Naive thymus-derived CD4-positive, alpha-beta T cell (primary cell): ENCODE measurements at regions of chr4 and their contacts with region 1.

Region 1: DNA sequence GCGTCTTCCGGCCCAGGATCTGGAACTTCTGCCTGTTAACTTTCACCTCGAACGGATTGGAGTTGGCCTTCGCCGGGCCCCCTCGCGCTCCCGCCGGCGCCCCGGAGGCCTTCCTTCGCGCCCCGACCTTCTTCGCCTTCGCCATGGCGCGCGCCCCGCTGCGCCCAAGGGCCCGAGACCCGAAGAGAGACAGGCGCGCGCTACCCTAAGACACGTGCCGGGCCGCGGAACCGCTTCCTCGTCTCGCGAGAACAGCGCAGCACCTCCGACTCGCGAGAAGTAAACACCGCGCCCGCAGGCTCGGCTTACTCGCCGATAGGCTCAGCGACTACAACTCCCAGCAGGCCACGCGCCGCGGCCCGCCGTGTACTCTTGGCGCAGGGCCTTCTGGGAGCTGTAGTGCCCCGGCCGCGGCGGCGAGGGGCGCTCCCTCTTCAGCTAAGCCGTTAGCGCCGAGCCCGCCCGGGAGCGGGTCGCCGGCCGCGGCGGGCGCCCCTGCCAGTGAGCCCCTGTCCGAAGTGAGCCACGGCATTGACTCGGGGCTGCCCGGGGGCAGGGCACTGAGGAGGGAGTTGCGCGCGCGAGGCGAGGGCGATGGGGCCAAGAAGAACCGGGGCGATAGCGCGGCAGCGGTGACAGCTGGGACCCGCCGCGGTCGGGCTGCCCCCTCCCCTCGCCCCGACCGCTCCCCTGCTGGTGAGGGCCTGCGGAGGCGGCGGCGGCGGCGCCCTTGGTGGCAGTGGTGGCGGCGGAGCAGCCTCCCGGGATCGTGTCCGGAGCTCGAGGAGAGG is at the starts of genes GRK4 and NOP14:
- DNase-seq: peak; percentile 91 to 98 (median 96)
- ATAC-seq: peak; percentile 97
- H3K4me3 ChIP-seq: peak within 1 kb of the TSS; percentile 98
- H3K4me3 Mint-ChIP-seq: peak within 1 kb of the TSS; percentile 82 to 95 (median 90)
- H3K27ac ChIP-seq: peak within 1 kb of the TSS; percentile 84
- H3K27ac Mint-ChIP-seq: peak within 1 kb of the TSS; percentile 67 to 93 (median 85)
- H3K4me1 ChIP-seq: peaks cover 18 to 19% of the 10 kb centered on the region in 2 donors
- H3K4me1 Mint-ChIP-seq: peaks cover 20 to 42% (median 35%) of the 10 kb centered on the region in 7 donors
- H3K27me3 ChIP-seq: no peaks in the 10 kb centered on the region
- H3K27me3 Mint-ChIP-seq: peaks cover 0 to 2% (median 0%) of the 10 kb centered on the region in 5 donors
- total RNA-seq, gene GRK4: 1.7 to 4.0 (median 2.8) TPM
- total RNA-seq, gene NOP14: 23.1 to 59.8 (median 43.9) TPM

Region 2: GRCh38 chr4:1712216-1713002 is 1251.0 kb before region 1 on chr4 and contains the start of gene SLBP:
- CTCF ChIA-PET with region 1: no interaction called
- POLR2A ChIA-PET with region 1: no interaction called
- intact Hi-C with region 1: loop called in 1 of 2 experiments (anchors 5 kb)
- DNase-seq: peak; percentile 98 to 99 (median 98)
- ATAC-seq: peak; percentile 92
- H3K4me3 ChIP-seq: peak within 1 kb of the TSS; percentile 100
- H3K4me3 Mint-ChIP-seq: peak within 1 kb of the TSS; percentile 89 to 98 (median 94)
- H3K27ac ChIP-seq: peak within 1 kb of the TSS; percentile 99
- H3K27ac Mint-ChIP-seq: peak within 1 kb of the TSS; percentile 90 to 98 (median 94)
- H3K4me1 ChIP-seq: peaks cover 32 to 34% of the 10 kb centered on the region in 2 donors
- H3K4me1 Mint-ChIP-seq: peaks cover 11 to 67% (median 59%) of the 10 kb centered on the region in 7 donors
- H3K27me3 ChIP-seq: no peaks in the 10 kb centered on the region
- H3K27me3 Mint-ChIP-seq: no peaks in the 10 kb centered on the region
- total RNA-seq, gene SLBP: 29.5 to 103 (median 30.3) TPM

Region 3: DNA sequence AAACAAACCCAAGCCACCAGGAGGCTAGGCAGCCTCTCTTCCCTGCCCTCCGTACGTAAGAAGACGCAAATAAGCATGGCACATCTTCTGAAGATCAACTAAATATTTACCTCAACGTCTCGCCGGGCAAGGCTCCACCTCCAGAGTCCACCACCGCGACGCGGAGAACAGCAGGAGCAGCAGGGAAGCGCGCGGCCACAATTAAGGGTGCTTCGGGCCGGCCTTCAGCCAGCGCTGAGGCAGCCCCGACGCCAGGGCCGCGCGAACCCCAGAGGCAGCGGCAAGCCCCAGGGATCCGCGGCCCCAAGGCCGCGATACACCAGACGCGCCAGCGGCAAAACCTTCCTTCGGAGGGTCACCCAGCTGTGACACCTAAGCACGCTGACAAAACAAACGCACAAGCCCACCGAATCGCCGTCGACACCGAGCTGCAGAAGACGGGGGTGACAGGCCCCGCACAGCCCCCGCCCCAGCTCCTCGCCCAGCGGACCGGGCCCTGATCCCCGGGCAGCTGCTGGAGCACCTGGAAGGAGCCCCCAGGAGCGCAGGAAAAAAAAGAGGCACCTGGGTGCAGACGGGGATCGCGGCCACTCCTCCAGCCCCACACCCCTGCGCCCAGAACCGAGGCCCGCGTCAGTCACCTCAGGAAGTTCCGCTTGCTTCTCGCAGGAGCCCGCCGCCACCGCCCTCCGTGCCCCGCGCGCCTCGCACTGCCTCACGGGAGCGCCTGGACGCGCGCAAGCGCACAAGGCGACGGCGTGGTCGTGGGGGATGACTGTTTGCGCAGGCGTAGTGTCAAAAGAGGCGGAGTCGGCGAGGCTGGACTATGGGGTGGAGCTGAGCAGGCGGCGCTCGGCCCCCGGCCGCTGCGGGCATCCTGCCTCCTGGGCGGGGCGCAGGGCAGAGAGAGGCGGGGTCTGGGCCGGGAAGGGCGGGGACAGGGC is 721.7 kb before region 1 on chr4 and contains the starts of genes HAUS3 and POLN:
- CTCF ChIA-PET with region 1: no interaction called
- POLR2A ChIA-PET with region 1: no interaction called
- intact Hi-C with region 1: loop called (anchors 1 to 5 kb)
- DNase-seq: peak; percentile 96 to 100 (median 99)
- ATAC-seq: peak; percentile 97
- H3K4me3 ChIP-seq: peak within 1 kb of the TSS; percentile 93
- H3K4me3 Mint-ChIP-seq: peak within 1 kb of the TSS; percentile 80 to 95 (median 91)
- H3K27ac ChIP-seq: peak within 1 kb of the TSS; percentile 89
- H3K27ac Mint-ChIP-seq: peak within 1 kb of the TSS; percentile 83 to 95 (median 90)
- H3K4me1 ChIP-seq: peaks cover 37 to 38% of the 10 kb centered on the region in 2 donors
- H3K4me1 Mint-ChIP-seq: peaks cover 48 to 65% (median 60%) of the 10 kb centered on the region in 7 donors
- H3K27me3 ChIP-seq: no peaks in the 10 kb centered on the region
- H3K27me3 Mint-ChIP-seq: peaks cover 0 to 6% (median 0%) of the 10 kb centered on the region in 5 donors
- total RNA-seq, gene HAUS3: 24.4 to 88.2 (median 34.1) TPM
- total RNA-seq, gene POLN: 2.4 to 5.4 (median 3.2) TPM

Region 4: GRCh38 chr4:2536193-2537010 is 427.0 kb before region 1 on chr4 and contains the start of gene FAM193A:
- CTCF ChIA-PET with region 1: no interaction called
- POLR2A ChIA-PET with region 1: no interaction called
- intact Hi-C with region 1: loop called in 1 of 2 experiments (anchors 1 kb)
- DNase-seq: peak; percentile 93 to 99 (median 99)
- ATAC-seq: peak; percentile 96
- H3K4me3 ChIP-seq: peak within 1 kb of the TSS; percentile 58
- H3K4me3 Mint-ChIP-seq: peak within 1 kb of the TSS; percentile 87 to 95 (median 92)
- H3K27ac ChIP-seq: peak within 1 kb of the TSS; percentile 92
- H3K27ac Mint-ChIP-seq: peak within 1 kb of the TSS; percentile 86 to 98 (median 92)
- H3K4me1 ChIP-seq: peaks cover 11 to 15% of the 10 kb centered on the region in 2 donors
- H3K4me1 Mint-ChIP-seq: peaks cover 5 to 36% (median 19%) of the 10 kb centered on the region in 7 donors
- H3K27me3 ChIP-seq: no peaks in the 10 kb centered on the region
- H3K27me3 Mint-ChIP-seq: no peaks in the 10 kb centered on the region
- total RNA-seq, gene FAM193A: 32.8 to 47.2 (median 44.1) TPM

Region 5: DNA sequence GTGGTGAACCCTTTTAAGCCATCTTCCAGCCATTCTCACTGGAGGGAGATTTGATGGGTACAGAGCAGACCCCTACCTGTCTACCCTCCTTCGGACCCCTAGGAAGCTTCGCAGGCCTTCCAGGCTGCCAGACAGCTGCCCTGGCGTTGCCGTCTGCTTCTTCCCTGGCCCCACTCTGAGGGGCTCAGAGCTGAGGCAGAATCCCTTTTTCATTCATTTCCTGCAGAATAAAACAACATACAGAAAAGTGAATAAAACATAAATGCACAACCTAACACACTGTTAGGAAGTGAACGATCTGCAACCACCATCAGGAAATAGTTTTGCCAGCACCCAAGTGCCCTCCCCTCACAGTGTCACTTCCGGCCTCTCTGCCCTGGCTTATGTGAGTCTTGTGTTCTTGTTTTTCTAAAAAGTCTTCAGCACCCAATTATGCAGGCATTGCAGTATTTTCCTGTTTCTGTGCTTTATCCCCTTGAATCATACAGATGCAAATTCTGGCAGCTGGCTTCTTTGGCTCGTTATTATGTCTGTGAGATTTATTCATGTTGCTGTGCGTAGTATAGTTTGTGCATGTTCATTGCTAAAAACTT is 125.4 kb before region 1 on chr4:
- CTCF ChIA-PET with region 1: interaction called, 4 read pairs
- POLR2A ChIA-PET with region 1: interaction called, 3 read pairs
- intact Hi-C with region 1: loop called in 1 of 2 experiments (anchors 1 kb)
- DNase-seq: peak in 7 of 9 donors; percentile 74 to 86 (median 83)
- ATAC-seq: peak; percentile 94
- H3K4me3 ChIP-seq: peak overlapping the region; percentile 66
- H3K4me3 Mint-ChIP-seq: peak overlapping the region; percentile 82 to 96 (median 88)
- H3K27ac ChIP-seq: peak overlapping the region; percentile 82
- H3K27ac Mint-ChIP-seq: peak overlapping the region; percentile 91 to 98 (median 94)
- H3K4me1 ChIP-seq: peaks cover 54 to 60% of the 10 kb centered on the region in 2 donors
- H3K4me1 Mint-ChIP-seq: peaks cover 48 to 83% (median 54%) of the 10 kb centered on the region in 7 donors
- H3K27me3 ChIP-seq: no peaks in the 10 kb centered on the region
- H3K27me3 Mint-ChIP-seq: no peaks in the 10 kb centered on the region

Region 6: DNA sequence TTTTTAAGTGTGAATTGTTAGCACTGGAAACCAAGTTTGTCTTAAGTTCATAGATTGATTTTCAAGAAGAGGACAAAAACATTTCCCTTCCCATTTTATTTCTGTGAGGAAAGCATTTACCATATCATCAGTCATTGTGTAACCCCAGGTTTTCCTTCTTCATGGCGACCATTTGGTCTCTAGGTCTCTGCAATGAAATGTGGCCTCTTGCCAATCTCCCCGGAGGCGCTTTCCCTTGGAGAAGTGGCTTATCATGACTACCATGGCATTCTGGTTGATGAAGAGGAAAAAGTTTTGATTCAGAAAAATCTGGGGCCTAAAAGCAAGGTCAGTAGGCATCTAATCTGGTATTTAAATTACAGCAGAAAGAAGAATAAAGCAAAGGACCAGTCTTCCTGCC is 65.4 kb before region 1 on chr4:
- CTCF ChIA-PET with region 1: no interaction called
- POLR2A ChIA-PET with region 1: no interaction called
- intact Hi-C with region 1: no loop called
- DNase-seq: no peak
- ATAC-seq: no peak
- H3K4me3 ChIP-seq: no peak overlapping the region
- H3K4me3 Mint-ChIP-seq: no peak overlapping the region
- H3K27ac ChIP-seq: no peak overlapping the region
- H3K27ac Mint-ChIP-seq: peak overlapping the region in 6 of 9 donors; percentile 10 to 59 (median 40)
- H3K4me1 ChIP-seq: no peaks in the 10 kb centered on the region
- H3K4me1 Mint-ChIP-seq: peaks cover 0 to 6% (median 0%) of the 10 kb centered on the region in 7 donors
- H3K27me3 ChIP-seq: no peaks in the 10 kb centered on the region
- H3K27me3 Mint-ChIP-seq: no peaks in the 10 kb centered on the region

Region 7: DNA sequence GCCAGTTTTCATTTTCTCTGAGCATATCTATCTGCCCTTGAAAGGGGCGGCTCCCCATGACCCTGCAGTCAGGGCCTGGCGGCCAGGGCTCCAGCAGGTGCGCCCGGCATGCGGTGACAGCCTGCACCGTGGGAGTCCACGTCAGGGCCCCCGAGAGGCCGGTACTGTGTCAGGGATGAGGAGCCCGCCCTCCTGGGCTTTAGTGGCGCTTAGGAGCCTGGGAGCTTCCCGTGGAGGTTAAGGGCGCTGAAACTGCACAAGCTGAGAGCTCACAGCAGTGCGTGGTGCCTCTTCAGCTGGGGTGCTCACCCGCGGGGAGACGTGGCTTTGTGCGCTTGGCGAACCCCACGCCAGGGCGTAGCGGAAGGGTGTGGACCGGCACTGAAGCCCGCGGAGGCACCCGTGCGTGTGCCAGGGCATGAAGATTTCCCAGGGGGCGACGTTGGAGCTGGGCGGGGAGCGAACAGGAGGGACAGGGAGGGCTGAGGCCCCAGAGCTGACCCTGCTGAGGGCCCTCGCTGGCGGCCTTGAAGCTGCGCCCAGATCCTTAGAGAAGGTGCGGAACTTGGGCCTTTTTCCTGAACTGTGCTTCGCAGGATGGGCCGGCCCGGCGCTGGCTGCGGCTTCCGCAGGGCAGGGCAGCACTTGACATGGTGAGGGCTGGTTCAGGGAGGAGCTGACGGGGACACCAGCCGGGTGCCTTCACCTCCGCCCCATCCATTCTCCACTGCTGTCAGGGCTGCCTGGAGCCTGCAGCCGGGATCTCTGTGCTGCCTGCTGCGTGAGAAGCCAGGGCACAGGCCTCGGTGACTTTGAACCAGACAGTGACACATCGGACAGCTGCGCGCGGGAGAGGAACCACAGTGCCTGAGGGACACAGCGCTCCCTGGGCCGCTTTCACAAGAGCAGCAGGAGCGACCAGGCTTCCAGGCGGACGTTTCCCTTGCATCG is 78.1 kb after region 1 on chr4:
- CTCF ChIA-PET with region 1: interaction called, 4 read pairs
- POLR2A ChIA-PET with region 1: interaction called, 4 read pairs
- intact Hi-C with region 1: loop called (anchors 1 kb)
- DNase-seq: peak in 8 of 9 donors; percentile 30 to 40 (median 36)
- ATAC-seq: peak; percentile 55
- H3K4me3 ChIP-seq: peak overlapping the region; percentile 66
- H3K4me3 Mint-ChIP-seq: peak overlapping the region; percentile 83 to 98 (median 89)
- H3K27ac ChIP-seq: peak overlapping the region; percentile 54
- H3K27ac Mint-ChIP-seq: peak overlapping the region in 8 of 9 donors; percentile 43 to 88 (median 84)
- H3K4me1 ChIP-seq: peaks cover 38 to 39% of the 10 kb centered on the region in 2 donors
- H3K4me1 Mint-ChIP-seq: peaks cover 40 to 72% (median 59%) of the 10 kb centered on the region in 7 donors
- H3K27me3 ChIP-seq: no peaks in the 10 kb centered on the region
- H3K27me3 Mint-ChIP-seq: peaks cover 0 to 6% (median 0%) of the 10 kb centered on the region in 5 donors

Region 8: GRCh38 chr4:3292571-3293400 is 329.4 kb after region 1 on chr4 and contains the start of gene RGS12:
- CTCF ChIA-PET with region 1: no interaction called
- POLR2A ChIA-PET with region 1: no interaction called
- intact Hi-C with region 1: loop called (anchors 5 kb)
- DNase-seq: peak; percentile 65 to 91 (median 75)
- ATAC-seq: peak; percentile 91
- H3K4me3 ChIP-seq: peak within 1 kb of the TSS; percentile 79
- H3K4me3 Mint-ChIP-seq: peak within 1 kb of the TSS; percentile 86 to 98 (median 92)
- H3K27ac ChIP-seq: peak within 1 kb of the TSS; percentile 69
- H3K27ac Mint-ChIP-seq: peak within 1 kb of the TSS; percentile 68 to 93 (median 82)
- H3K4me1 ChIP-seq: peaks cover 5 to 8% of the 10 kb centered on the region in 2 donors
- H3K4me1 Mint-ChIP-seq: peaks cover 12 to 37% (median 33%) of the 10 kb centered on the region in 7 donors
- H3K27me3 ChIP-seq: no peaks in the 10 kb centered on the region
- H3K27me3 Mint-ChIP-seq: peaks cover 0 to 67% (median 0%) of the 10 kb centered on the region in 5 donors
- total RNA-seq, gene RGS12: 2.5 to 13.3 (median 7.5) TPM